Breast epithelium (tissue), 4 donors: ENCODE measurements at regions of chr11 and their contacts with region 1.

Region 1: GRCh38 chr11:98862169-98862568 is 158.6 kb upstream of the CNTN5 start:
- DNase-seq: no peak
- H3K4me3 ChIP-seq: no peak overlapping the region
- H3K27ac ChIP-seq: no peak overlapping the region
- H3K4me1 ChIP-seq: no peaks in the 10 kb centered on the region
- H3K27me3 ChIP-seq: no peaks in the 10 kb centered on the region
- CTCF ChIP-seq: no peak
- POLR2A ChIP-seq: no peak

Region 2: DNA sequence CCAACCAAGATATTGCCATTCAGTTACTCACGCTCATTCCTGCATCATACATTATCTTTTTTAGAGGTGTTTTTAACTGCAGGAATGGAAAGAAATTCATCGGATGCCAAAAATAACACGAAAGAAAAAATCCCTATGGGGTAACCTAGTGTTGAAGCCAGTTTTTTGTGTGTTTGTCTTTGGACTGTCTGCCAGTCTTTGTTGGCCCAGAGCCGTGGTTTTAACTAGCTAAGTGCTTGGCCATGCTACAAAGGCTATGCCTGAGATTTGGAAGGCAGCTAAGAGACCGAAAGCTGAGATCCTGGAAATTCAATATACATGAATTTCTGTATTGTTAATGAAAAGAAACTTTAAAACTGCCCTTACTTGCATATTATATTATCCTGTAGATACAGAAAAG is 151.2 kb before region 1 on chr11:
- intact Hi-C with region 1: loop called (anchors 5 kb)
- DNase-seq: no peak
- H3K4me3 ChIP-seq: no peak overlapping the region
- H3K27ac ChIP-seq: no peak overlapping the region
- H3K4me1 ChIP-seq: no peaks in the 10 kb centered on the region
- H3K27me3 ChIP-seq: no peaks in the 10 kb centered on the region
- CTCF ChIP-seq: no peak
- POLR2A ChIP-seq: no peak

Region 3: GRCh38 chr11:98874050-98874449 is 11.9 kb after region 1 on chr11:
- intact Hi-C with region 1: no loop called
- DNase-seq: no peak
- H3K4me3 ChIP-seq: no peak overlapping the region
- H3K27ac ChIP-seq: no peak overlapping the region
- H3K4me1 ChIP-seq: no peaks in the 10 kb centered on the region
- H3K27me3 ChIP-seq: no peaks in the 10 kb centered on the region
- CTCF ChIP-seq: no peak
- POLR2A ChIP-seq: no peak